Spleen (tissue), 13 donors: ENCODE measurements at regions of chr1 and their contacts with region 1.

Region 1: DNA sequence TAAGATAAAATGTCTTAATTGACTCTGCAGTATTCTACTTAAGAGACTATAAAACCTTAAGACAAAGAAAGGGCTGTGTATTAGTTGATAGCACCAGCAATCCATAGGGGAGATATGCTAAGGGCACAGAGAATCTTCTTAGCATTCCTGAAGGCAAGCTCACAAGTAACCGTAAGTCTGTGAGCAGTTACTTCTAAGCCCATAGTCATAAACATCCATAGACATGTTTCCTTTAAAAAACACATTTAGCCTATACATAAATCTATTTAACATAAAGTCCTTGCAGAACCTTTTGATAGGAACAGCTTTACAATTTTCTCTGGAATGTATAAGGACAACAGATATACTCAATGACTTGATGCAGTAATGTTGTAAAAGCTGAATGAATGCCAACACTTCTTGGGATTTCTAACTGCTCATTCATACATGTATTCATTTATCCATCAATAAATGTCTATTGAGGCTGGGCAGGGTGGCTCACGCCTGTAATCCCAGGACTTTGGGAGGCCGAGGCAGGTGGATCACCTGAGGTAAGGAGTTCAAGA is 6.3 kb upstream of the ERRFI1 start:
- DNase-seq: no peak
- H3K4me3 ChIP-seq: no peak overlapping the region
- H3K27ac ChIP-seq: no peak overlapping the region
- H3K4me1 ChIP-seq: peaks cover 0 to 16% (median 2%) of the 10 kb centered on the region in 6 donors
- H3K27me3 ChIP-seq: peaks cover 0 to 1% (median 0%) of the 10 kb centered on the region in 7 donors
- CTCF ChIP-seq: no peak
- POLR2A ChIP-seq: no peak

Region 2: GRCh38 chr1:7771823-7772299 is 260.6 kb before region 1 on chr1:
- intact Hi-C with region 1: no loop called
- DNase-seq: no peak
- H3K4me3 ChIP-seq: peak overlapping the region; percentile 73 to 96 (median 89)
- H3K27ac ChIP-seq: peak overlapping the region; percentile 89 to 99 (median 98)
- H3K4me1 ChIP-seq: peaks cover 18 to 60% (median 40%) of the 10 kb centered on the region in 6 donors
- H3K27me3 ChIP-seq: no peaks in the 10 kb centered on the region
- CTCF ChIP-seq: no peak
- POLR2A ChIP-seq: no peak

Region 3: GRCh38 chr1:8307628-8308027 is 275.2 kb after region 1 on chr1:
- intact Hi-C with region 1: loop called (anchors 2 kb)
- DNase-seq: no peak
- H3K4me3 ChIP-seq: no peak overlapping the region
- H3K27ac ChIP-seq: no peak overlapping the region
- H3K4me1 ChIP-seq: no peaks in the 10 kb centered on the region
- H3K27me3 ChIP-seq: no peaks in the 10 kb centered on the region
- CTCF ChIP-seq: no peak
- POLR2A ChIP-seq: no peak